ENCODE measurements at regions of chr10 and their contacts with region 1.

Region 1: DNA sequence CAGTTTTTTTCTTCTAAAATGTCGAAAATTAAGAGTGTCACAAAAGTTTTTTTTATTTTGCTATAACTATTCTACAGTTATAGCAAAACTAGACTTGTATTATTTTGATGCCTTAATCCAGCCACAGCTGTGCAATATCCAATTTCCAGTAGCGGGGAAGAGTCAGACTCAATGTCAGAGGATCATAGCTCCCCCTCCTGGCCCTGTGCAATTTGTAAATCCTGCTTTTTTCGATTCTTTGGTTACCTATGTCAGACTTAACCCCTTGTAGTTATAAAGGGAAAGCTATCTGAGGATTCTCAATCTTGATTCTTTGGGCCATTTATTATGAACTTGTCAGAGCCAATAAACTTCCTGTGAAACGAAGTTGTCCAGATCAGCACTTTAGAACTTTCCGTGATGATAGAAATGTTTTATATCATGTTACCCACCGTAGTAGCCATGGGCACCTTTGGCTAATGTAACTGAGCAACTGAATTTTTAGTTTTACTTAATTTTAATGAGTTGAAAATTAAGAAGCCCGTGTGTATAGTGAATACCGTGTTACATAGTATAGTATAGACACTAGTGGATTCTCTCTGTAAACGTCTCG is 87.7 kb upstream of the PRKCQ start:
- DNase-seq: peak; percentile 27 to 36
- H3K4me3 ChIP-seq: no peak overlapping the region
- H3K27ac ChIP-seq: no peak overlapping the region
- H3K4me1 ChIP-seq: no peaks in the 10 kb centered on the region
- H3K27me3 ChIP-seq: no peaks in the 10 kb centered on the region
- CTCF ChIP-seq: peak; percentile 64

Region 2: GRCh38 chr10:6416892-6417512 is 250.8 kb before region 1 on chr10:
- CTCF ChIA-PET with region 1: interaction called, 6 read pairs
- POLR2A ChIA-PET with region 1: no interaction called
- intact Hi-C with region 1: loop called (anchors 1 kb)
- DNase-seq: no peak
- H3K4me3 ChIP-seq: no peak overlapping the region
- H3K27ac ChIP-seq: no peak overlapping the region
- H3K4me1 ChIP-seq: no peaks in the 10 kb centered on the region
- H3K27me3 ChIP-seq: no peaks in the 10 kb centered on the region
- CTCF ChIP-seq: peak; percentile 72

Region 3: GRCh38 chr10:6580279-6581029 is 87.3 kb before region 1 on chr10:
- CTCF ChIA-PET with region 1: no interaction called
- POLR2A ChIA-PET with region 1: no interaction called
- intact Hi-C with region 1: loop called (anchors 5 kb)
- DNase-seq: peak; percentile 45 to 83
- H3K4me3 ChIP-seq: peak overlapping the region; percentile 63
- H3K27ac ChIP-seq: peak overlapping the region; percentile 50
- H3K4me1 ChIP-seq: no peaks in the 10 kb centered on the region
- H3K27me3 ChIP-seq: no peaks in the 10 kb centered on the region
- CTCF ChIP-seq: no peak; the same call in 1 of the 2 replicates

Region 4: DNA sequence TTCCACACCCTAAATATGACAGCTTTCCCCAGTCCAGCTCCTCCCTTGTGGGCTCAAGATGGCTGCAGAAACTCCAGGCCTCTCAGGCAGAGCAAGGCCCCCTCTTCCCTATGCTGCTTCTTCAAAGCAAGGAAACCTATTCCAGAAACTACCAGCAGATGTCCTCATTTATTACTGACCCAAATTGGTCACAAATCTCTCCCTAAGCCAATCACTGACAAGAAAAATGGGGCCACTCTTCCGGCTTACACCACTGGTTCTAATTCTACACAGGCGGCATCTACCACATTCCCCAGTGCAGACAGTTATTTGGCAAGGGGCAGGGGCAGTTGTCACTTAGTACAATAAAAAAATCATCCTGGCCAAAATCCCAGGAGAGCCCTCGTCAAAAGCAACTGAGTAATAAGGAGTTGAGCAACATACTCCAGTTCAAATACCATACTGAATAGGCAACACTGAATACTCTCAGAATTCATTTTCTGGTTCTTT is 592.7 kb after region 1 on chr10:
- CTCF ChIA-PET with region 1: no interaction called
- POLR2A ChIA-PET with region 1: no interaction called
- intact Hi-C with region 1: loop called (anchors 5 kb)
- DNase-seq: peak in 1 of 2 experiments; percentile 2
- H3K4me3 ChIP-seq: no peak overlapping the region
- H3K27ac ChIP-seq: no peak overlapping the region
- H3K4me1 ChIP-seq: no peaks in the 10 kb centered on the region
- H3K27me3 ChIP-seq: peaks cover 4% of the 10 kb centered on the region; the same call in 1 of the 2 replicates
- CTCF ChIP-seq: peak; percentile 37; the same call in 1 of the 2 replicates

Region 5: GRCh38 chr10:7525314-7526016 is 857.7 kb after region 1 on chr10:
- CTCF ChIA-PET with region 1: no interaction called
- POLR2A ChIA-PET with region 1: no interaction called
- intact Hi-C with region 1: loop called (anchors 10 kb)
- DNase-seq: peak; percentile 42 to 49
- H3K4me3 ChIP-seq: no peak overlapping the region
- H3K27ac ChIP-seq: no peak overlapping the region
- H3K4me1 ChIP-seq: no peaks in the 10 kb centered on the region
- H3K27me3 ChIP-seq: peaks cover 16% of the 10 kb centered on the region
- CTCF ChIP-seq: peak; percentile 78

Measured in PC-9 (cell line).